ENCODE measurements at regions of chr17 and their contacts with region 1.

Region 1: DNA sequence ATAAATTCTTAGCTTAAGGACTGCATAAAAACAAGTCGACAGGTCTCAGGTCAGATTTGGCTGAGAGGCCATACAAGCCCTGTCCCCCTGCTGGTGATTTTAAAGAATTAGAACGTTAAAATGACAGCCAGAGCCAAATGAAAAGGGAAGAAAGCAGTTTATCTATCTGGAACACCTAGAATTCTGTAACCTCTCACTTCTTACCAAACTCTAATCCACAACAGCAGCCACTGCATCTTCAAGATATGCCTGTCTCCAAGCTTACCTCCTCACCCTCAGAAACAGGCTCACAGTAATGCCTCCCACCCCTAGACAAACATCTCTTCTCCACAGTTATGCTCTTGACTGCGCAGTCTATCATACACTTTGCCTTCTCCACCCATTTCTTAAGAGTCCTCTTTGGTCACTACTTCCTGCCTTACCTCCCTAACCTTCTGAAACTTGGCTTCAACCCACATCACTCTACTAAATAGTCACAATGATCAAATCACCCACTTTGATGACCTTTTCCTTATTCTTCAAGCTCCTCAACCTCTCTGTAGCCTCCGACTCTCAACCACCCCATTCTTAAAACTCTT is 14.2 kb downstream of the ANKFY1 start:
- DNase-seq: no peak
- H3K4me3 Mint-ChIP-seq: no peak overlapping the region
- H3K27ac Mint-ChIP-seq: no peak overlapping the region
- H3K4me1 Mint-ChIP-seq: peaks cover 47% of the 10 kb centered on the region
- H3K27me3 Mint-ChIP-seq: no peaks in the 10 kb centered on the region

Region 2: DNA sequence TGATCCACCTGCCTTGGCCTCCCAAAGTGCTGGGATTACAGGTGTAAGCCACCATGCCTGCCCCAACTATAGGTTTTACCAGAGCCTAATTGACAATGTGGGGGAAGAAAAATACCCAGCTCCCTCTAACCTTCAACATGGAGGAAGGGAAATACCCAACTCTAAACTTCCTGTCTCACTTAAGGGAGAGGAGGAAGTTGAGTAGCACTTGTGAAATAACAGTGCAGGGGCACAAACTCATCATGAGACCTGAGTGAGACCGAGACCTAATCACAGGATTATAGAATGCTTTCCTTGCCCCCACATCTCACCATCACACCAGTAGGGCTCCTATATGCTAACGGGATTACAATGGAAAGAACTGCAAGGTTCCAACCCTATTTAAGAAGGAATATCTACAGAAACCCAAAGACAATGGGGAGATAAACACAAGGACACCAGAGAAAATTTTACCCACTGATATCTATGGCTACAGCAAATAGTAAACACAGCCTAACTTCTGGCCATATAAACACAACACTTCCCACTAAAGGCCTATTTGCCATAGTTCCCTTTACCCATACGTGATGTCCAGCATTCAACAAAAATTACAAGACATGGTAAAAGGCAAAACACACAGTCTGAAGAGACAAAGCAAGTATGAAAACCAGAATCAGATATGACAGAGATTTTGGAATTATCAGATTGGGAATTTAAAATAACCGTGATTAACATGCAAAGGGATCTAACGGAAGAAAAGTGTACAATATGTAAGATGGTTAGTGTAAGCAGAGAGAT is 978.3 kb before region 1 on chr17:
- CTCF ChIA-PET with region 1: no interaction called
- POLR2A ChIA-PET with region 1: no interaction called
- DNase-seq: no peak
- H3K4me3 Mint-ChIP-seq: no peak overlapping the region
- H3K27ac Mint-ChIP-seq: no peak overlapping the region
- H3K4me1 Mint-ChIP-seq: no peaks in the 10 kb centered on the region
- H3K27me3 Mint-ChIP-seq: no peaks in the 10 kb centered on the region

Region 3: GRCh38 chr17:4263282-4264215 is 14.0 kb after region 1 on chr17 and contains the start of gene ANKFY1:
- CTCF ChIA-PET with region 1: interaction called, 43 read pairs
- POLR2A ChIA-PET with region 1: no interaction called
- DNase-seq: peak; percentile 98
- H3K4me3 Mint-ChIP-seq: peak within 1 kb of the TSS; percentile 91
- H3K27ac Mint-ChIP-seq: peak within 1 kb of the TSS; percentile 90
- H3K4me1 Mint-ChIP-seq: peaks cover 31% of the 10 kb centered on the region
- H3K27me3 Mint-ChIP-seq: no peaks in the 10 kb centered on the region
- total RNA-seq, gene ANKFY1: 79.1 to 87.5 TPM

Region 4: DNA sequence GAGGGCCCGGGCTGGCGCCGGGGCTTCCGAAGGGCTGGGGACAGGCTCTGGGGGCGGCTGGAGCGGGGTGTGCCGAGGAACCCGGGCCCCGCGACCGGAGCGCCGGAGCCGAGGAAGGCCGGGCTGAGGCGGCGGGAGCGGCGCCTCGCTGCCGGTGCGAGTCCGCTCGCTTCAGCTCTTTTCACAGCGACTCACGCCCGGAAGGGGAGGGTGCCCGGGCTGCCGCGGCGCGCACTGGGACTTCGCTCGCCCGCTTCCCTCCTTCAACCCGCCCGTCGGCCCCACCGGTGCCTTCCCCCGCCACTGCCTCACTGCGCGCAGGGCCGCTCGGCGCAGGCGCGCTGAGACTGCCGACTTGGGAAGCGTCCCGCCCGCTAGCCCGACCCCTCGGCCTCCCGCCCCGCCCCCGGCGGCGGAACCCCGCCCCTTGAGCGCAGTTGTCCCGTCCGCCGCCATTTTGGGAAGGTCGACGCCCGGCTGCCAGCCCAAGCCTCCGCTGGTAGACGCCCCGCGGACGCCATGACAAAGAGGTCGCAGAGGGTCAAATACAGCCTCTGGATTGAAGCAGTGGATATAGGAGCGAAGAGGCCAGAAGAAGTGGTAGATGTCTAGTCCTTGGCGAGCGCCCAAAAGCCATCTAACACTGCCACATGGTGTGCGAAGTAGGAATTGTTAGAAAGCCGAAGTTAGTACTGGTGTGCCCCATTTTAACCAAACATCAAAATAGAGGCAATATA is 117.0 kb after region 1 on chr17 and contains the start of gene UBE2G1:
- CTCF ChIA-PET with region 1: no interaction called
- POLR2A ChIA-PET with region 1: no interaction called
- DNase-seq: peak; percentile 98
- H3K4me3 Mint-ChIP-seq: peak within 1 kb of the TSS; percentile 67
- H3K27ac Mint-ChIP-seq: peak within 1 kb of the TSS; percentile 97
- H3K4me1 Mint-ChIP-seq: peaks cover 35% of the 10 kb centered on the region
- H3K27me3 Mint-ChIP-seq: no peaks in the 10 kb centered on the region
- total RNA-seq, gene UBE2G1: 51.6 to 56.7 TPM